ENCODE measurements at regions of chr3 and their contacts with region 1.

Region 1: GRCh38 chr3:15108082-15108545 is 9.2 kb upstream of the RBSN start:
- DNase-seq: peak; percentile 76
- ATAC-seq: peak; percentile 99
- H3K4me3 Mint-ChIP-seq: no peak overlapping the region
- H3K27ac Mint-ChIP-seq: no peak overlapping the region
- H3K4me1 Mint-ChIP-seq: peaks cover 2% of the 10 kb centered on the region
- H3K27me3 Mint-ChIP-seq: peaks cover 8% of the 10 kb centered on the region
- CTCF ChIP-seq: peak; percentile 96

Region 2: GRCh38 chr3:14651440-14652251 is 456.5 kb before region 1 on chr3 and contains the start of gene CCDC174:
- CTCF ChIA-PET with region 1: no interaction called
- POLR2A ChIA-PET with region 1: no interaction called
- intact Hi-C with region 1: no loop called
- DNase-seq: peak; percentile 97
- ATAC-seq: peak; percentile 99
- H3K4me3 Mint-ChIP-seq: peak within 1 kb of the TSS; percentile 97
- H3K27ac Mint-ChIP-seq: peak within 1 kb of the TSS; percentile 98
- H3K4me1 Mint-ChIP-seq: peaks cover 35% of the 10 kb centered on the region
- H3K27me3 Mint-ChIP-seq: no peaks in the 10 kb centered on the region
- CTCF ChIP-seq: no peak
- total RNA-seq, gene CCDC174: 14.2 to 16.2 TPM

Region 3: GRCh38 chr3:14871481-14872200 is 236.5 kb before region 1 on chr3:
- CTCF ChIA-PET with region 1: no interaction called
- POLR2A ChIA-PET with region 1: no interaction called
- intact Hi-C with region 1: no loop called
- DNase-seq: no peak
- ATAC-seq: no peak
- H3K4me3 Mint-ChIP-seq: no peak overlapping the region
- H3K27ac Mint-ChIP-seq: no peak overlapping the region
- H3K4me1 Mint-ChIP-seq: no peaks in the 10 kb centered on the region
- H3K27me3 Mint-ChIP-seq: no peaks in the 10 kb centered on the region
- CTCF ChIP-seq: no peak

Region 4: DNA sequence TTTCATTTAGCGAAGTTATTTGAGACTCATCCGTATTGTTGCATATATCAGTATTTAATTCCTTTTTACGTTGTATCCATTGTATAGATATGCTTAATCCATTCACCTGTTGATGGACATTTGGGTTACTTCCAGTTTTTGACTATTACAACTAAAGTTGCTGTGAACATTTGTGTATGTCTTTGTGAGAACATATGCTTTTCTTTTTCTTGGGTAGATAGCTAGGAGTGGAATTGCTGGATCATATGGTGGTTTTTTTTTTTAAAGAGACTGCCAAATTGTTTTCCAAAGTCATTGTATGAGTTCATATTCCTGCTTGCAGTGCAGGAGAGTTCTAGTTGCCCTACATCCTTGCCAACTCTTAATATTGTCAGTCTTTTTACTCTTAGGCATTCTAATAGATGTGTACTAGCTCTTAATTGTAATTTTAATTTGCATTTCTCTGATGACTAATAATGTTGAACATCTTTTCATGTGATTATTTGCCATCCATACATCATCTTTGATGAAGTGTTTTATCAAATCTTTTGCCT is 123.5 kb before region 1 on chr3:
- CTCF ChIA-PET with region 1: no interaction called
- POLR2A ChIA-PET with region 1: no interaction called
- intact Hi-C with region 1: no loop called
- DNase-seq: no peak
- ATAC-seq: no peak
- H3K4me3 Mint-ChIP-seq: no peak overlapping the region
- H3K27ac Mint-ChIP-seq: no peak overlapping the region
- H3K4me1 Mint-ChIP-seq: peaks cover 30% of the 10 kb centered on the region
- H3K27me3 Mint-ChIP-seq: no peaks in the 10 kb centered on the region
- CTCF ChIP-seq: no peak

Region 5: GRCh38 chr3:15040844-15041243 is 67.3 kb before region 1 on chr3:
- CTCF ChIA-PET with region 1: no interaction called
- POLR2A ChIA-PET with region 1: no interaction called
- intact Hi-C with region 1: no loop called
- DNase-seq: no peak
- ATAC-seq: peak; percentile 17
- H3K4me3 Mint-ChIP-seq: no peak overlapping the region
- H3K27ac Mint-ChIP-seq: peak overlapping the region; percentile 23
- H3K4me1 Mint-ChIP-seq: peaks cover 17% of the 10 kb centered on the region
- H3K27me3 Mint-ChIP-seq: no peaks in the 10 kb centered on the region
- CTCF ChIP-seq: no peak

Region 6: DNA sequence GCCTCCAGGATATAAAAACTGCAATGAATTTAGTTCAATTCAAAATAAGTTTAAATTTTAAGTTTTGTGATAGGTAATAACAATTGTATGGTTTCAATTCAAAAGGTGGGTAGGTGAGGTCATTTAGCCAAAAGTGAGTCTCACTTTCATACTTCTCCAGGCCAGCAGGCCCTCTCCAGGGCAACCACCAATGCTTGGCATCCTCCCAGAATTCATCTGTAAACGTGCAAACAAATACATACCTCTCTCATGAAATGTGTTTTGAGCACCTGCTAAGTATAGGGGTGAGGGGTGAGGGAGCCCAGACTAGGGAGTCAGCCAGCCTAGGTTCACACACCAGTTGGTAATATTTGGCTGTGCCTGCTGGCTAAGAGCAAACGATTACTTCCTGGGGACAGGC is 12.9 kb after region 1 on chr3:
- CTCF ChIA-PET with region 1: interaction called, 25 read pairs
- POLR2A ChIA-PET with region 1: interaction called, 7 read pairs
- intact Hi-C with region 1: no loop called
- DNase-seq: no peak
- ATAC-seq: no peak
- H3K4me3 Mint-ChIP-seq: no peak overlapping the region
- H3K27ac Mint-ChIP-seq: no peak overlapping the region
- H3K4me1 Mint-ChIP-seq: peaks cover 4% of the 10 kb centered on the region
- H3K27me3 Mint-ChIP-seq: no peaks in the 10 kb centered on the region
- CTCF ChIP-seq: no peak

Region 7: GRCh38 chr3:15199493-15200105 is 91.5 kb after region 1 on chr3:
- CTCF ChIA-PET with region 1: interaction called, 106 read pairs
- POLR2A ChIA-PET with region 1: interaction called, 3 read pairs
- intact Hi-C with region 1: loop called (anchors 10 kb)
- DNase-seq: no peak
- ATAC-seq: no peak
- H3K4me3 Mint-ChIP-seq: no peak overlapping the region
- H3K27ac Mint-ChIP-seq: no peak overlapping the region
- H3K4me1 Mint-ChIP-seq: peaks cover 18% of the 10 kb centered on the region
- H3K27me3 Mint-ChIP-seq: no peaks in the 10 kb centered on the region
- CTCF ChIP-seq: no peak

Measured in activated CD8-positive, alpha-beta T cell treated with anti-CD3 and anti-CD28 coated beads for 36 hours (primary cell).